AG04450 (cell line): ENCODE measurements at regions of chr3 and their contacts with region 1.

Region 1: GRCh38 chr3:73508330-73508954 is 116.3 kb downstream of the PDZRN3 start:
- DNase-seq: peak; percentile 36
- H3K4me3 ChIP-seq: no peak overlapping the region
- H3K27ac ChIP-seq: no peak overlapping the region
- H3K27me3 ChIP-seq: no peaks in the 10 kb centered on the region
- CTCF ChIP-seq: peak; percentile 80

Region 2: DNA sequence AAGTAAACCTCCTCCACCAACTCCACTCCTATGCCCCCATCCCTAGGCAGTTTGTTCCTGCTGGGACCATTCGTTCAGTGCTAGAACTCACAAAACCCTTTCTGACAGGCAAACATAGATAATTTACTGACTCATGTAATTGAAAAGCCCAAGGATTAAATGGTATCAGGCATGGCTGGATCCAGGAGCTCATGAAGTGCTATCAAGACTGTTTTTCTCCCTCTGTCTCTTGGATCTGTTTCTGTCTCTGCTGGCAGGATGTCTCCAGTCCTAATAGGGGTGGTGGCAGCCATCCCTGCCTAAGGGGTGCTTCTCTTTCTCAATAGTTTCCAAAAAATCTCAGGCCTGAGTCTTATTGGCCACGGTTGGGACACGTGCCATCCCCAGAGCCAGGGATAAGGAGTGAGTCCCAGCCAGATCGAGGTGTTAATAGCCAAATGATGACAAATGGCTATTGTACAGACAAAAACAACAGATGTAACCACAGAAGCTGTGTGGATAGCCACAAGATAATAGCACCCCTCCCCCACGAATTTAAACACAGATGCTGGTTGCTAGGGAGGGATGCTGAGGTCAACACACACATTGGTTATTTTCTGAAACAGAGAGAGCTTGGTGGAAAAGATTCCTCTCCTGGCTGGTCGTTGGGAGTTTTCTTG is 828.8 kb before region 1 on chr3:
- CTCF ChIA-PET with region 1: no interaction called
- POLR2A ChIA-PET with region 1: no interaction called
- DNase-seq: no peak
- H3K4me3 ChIP-seq: no peak overlapping the region
- H3K27ac ChIP-seq: no peak overlapping the region
- H3K27me3 ChIP-seq: peaks cover 13% of the 10 kb centered on the region
- CTCF ChIP-seq: no peak

Region 3: GRCh38 chr3:72862314-72863090 is 645.9 kb before region 1 on chr3:
- CTCF ChIA-PET with region 1: no interaction called
- POLR2A ChIA-PET with region 1: no interaction called
- DNase-seq: no peak
- H3K4me3 ChIP-seq: no peak overlapping the region
- H3K27ac ChIP-seq: no peak overlapping the region
- H3K27me3 ChIP-seq: peaks cover 2% of the 10 kb centered on the region
- CTCF ChIP-seq: no peak

Region 4: GRCh38 chr3:73493543-73494308 is 14.7 kb before region 1 on chr3:
- CTCF ChIA-PET with region 1: interaction called, 10 read pairs
- POLR2A ChIA-PET with region 1: interaction called, 3 read pairs
- DNase-seq: no peak
- H3K4me3 ChIP-seq: no peak overlapping the region
- H3K27ac ChIP-seq: no peak overlapping the region
- H3K27me3 ChIP-seq: no peaks in the 10 kb centered on the region
- CTCF ChIP-seq: no peak

Region 5: GRCh38 chr3:73547427-73548248 is 39.2 kb after region 1 on chr3:
- CTCF ChIA-PET with region 1: interaction called, 23 read pairs
- POLR2A ChIA-PET with region 1: interaction called, 10 read pairs
- DNase-seq: peak; percentile 82
- H3K4me3 ChIP-seq: no peak overlapping the region; the same call in 1 of the 2 replicates
- H3K27ac ChIP-seq: peak overlapping the region; percentile 99
- H3K27me3 ChIP-seq: no peaks in the 10 kb centered on the region
- CTCF ChIP-seq: no peak

Region 6: DNA sequence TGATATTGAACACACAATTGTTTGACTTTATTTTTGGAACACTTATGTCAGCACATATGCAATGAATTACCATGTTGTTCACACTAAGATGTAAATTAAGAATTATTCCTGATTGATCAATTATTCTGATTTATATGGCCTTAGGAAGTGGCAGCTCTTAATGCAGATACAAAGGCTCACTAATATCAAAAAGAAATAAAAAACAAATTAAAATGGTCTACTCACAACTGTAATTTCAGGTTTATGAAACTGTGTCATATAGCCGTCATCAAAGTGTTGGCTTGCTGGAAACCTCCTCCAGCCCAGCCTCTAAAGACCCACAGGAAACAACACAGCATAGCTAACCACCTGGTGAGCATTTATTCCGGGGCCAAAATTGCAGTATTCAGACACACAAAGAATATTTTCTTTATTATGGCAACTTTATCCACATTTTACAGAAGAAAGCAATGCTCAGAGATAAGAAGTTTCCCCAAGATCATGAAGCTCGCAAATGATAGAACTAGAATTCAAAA is 82.9 kb after region 1 on chr3:
- CTCF ChIA-PET with region 1: no interaction called
- POLR2A ChIA-PET with region 1: no interaction called
- DNase-seq: no peak
- H3K4me3 ChIP-seq: no peak overlapping the region
- H3K27ac ChIP-seq: no peak overlapping the region
- H3K27me3 ChIP-seq: no peaks in the 10 kb centered on the region
- CTCF ChIP-seq: no peak

Region 7: DNA sequence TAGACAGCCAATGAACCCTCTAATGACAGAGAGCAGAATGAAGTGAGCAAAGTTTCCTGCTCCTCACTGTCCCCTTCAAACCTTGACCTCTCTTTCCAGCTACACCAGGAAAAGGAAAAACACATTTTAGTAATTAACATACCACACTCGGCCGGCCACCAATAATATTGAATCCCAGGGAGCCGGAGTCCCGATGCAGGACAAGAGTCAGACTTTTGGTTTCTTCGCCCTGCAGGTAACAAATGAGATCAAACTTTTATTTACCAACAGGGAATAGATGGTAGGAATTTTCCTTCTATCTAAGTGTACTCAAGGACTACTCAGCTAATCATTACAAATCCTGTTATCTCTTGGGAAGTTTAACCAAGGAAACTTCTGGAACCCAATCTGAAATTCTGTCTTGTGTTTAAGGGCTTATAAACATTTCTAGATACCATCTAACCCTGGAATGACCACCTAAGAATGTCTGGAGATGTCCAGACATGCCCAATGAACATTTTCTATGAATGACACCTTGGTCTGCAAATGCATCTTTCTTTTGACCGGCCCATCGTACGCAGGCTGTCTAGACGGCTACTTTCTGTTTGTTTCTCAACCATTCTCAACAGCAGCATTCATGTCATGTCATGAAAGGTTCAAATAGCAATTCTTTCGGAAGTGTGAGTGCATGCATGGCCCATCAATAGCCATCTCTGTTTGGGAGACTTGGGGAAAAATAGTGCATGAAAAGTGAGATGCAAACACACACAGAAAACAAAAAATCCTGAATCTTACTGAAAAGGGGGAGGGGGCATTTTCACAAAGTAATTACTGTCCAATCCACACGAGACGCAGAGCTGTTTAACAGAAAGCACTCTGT is 100.2 kb after region 1 on chr3:
- CTCF ChIA-PET with region 1: interaction called, 10 read pairs
- POLR2A ChIA-PET with region 1: no interaction called
- DNase-seq: no peak
- H3K4me3 ChIP-seq: no peak overlapping the region
- H3K27ac ChIP-seq: no peak overlapping the region
- H3K27me3 ChIP-seq: no peaks in the 10 kb centered on the region
- CTCF ChIP-seq: no peak

Region 8: GRCh38 chr3:73624821-73625665 is 116.6 kb after region 1 on chr3 and contains the start of gene PDZRN3:
- CTCF ChIA-PET with region 1: interaction called, 23 read pairs
- POLR2A ChIA-PET with region 1: interaction called, 3 read pairs
- DNase-seq: no peak
- H3K4me3 ChIP-seq: peak within 1 kb of the TSS; percentile 89
- H3K27ac ChIP-seq: no peak within 1 kb of the TSS
- H3K27me3 ChIP-seq: no peaks in the 10 kb centered on the region
- CTCF ChIP-seq: no peak
- polyA plus RNA-seq, gene PDZRN3: 14.7 and 22.7 TPM in 2 replicates